ENCODE measurements at regions of chr9 and their contacts with region 1.

Region 1: GRCh38 chr9:37156781-37157356 is 36.5 kb downstream of the ZCCHC7 start:
- DNase-seq: no peak
- H3K4me3 ChIP-seq: no peak overlapping the region
- H3K27ac ChIP-seq: no peak overlapping the region
- H3K4me1 ChIP-seq: peaks cover 14% of the 10 kb centered on the region
- H3K27me3 ChIP-seq: no peaks in the 10 kb centered on the region
- CTCF ChIP-seq: no peak

Region 2: DNA sequence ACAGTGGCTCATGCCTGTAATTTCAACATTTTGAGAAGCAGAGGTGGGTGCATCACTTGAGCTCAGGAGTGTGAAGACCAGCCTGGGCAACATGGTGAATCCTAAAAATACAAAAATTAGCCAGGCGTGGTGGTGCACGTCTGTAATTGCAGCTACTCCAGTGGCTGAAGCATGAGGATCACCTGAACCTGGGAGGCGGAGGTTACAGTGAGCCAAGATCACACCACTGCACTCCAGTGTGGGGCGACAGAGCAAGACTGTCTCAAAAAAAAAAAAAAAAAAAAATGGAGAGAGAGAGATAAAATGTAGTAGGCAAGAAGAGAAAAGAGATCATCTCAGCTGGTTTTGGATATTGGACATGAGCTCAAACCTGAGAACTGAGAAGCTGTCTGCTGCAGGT is 60.2 kb before region 1 on chr9:
- CTCF ChIA-PET with region 1: no interaction called
- POLR2A ChIA-PET with region 1: no interaction called
- intact Hi-C with region 1: loop called (anchors 10 kb)
- DNase-seq: no peak
- H3K4me3 ChIP-seq: no peak overlapping the region
- H3K27ac ChIP-seq: no peak overlapping the region
- H3K4me1 ChIP-seq: no peaks in the 10 kb centered on the region
- H3K27me3 ChIP-seq: no peaks in the 10 kb centered on the region
- CTCF ChIP-seq: no peak